ENCODE measurements at regions of chr4 and their contacts with region 1.

Region 1: GRCh38 chr4:127622921-127623656 is 9.7 kb upstream of the INTU start:
- DNase-seq: peak; percentile 47
- H3K27ac ChIP-seq: peak overlapping the region; percentile 70
- CTCF ChIP-seq: peak; percentile 56

Region 2: GRCh38 chr4:127782274-127783025 is 159.4 kb after region 1 on chr4 and contains the start of gene HSPA4L:
- CTCF ChIA-PET with region 1: interaction called, 12 read pairs
- POLR2A ChIA-PET with region 1: no interaction called
- DNase-seq: peak; percentile 26
- H3K27ac ChIP-seq: peak within 1 kb of the TSS; percentile 92
- CTCF ChIP-seq: peak; percentile 65

Measured in RWPE1 (cell line).